CD4-positive, alpha-beta T cell (primary cell): ENCODE measurements at regions of chr16 and their contacts with region 1.

Region 1: GRCh38 chr16:3880623-3881498 is at the start of gene CREBBP:
- DNase-seq: peak; percentile 70 to 97 (median 86)
- ATAC-seq: peak; percentile 79
- H3K4me3 ChIP-seq: peak within 1 kb of the TSS; percentile 91
- H3K4me3 Mint-ChIP-seq: peak within 1 kb of the TSS; percentile 93
- H3K27ac ChIP-seq: no peak within 1 kb of the TSS
- H3K27ac Mint-ChIP-seq: peak within 1 kb of the TSS; percentile 94
- H3K4me1 ChIP-seq: peaks cover 37% of the 10 kb centered on the region
- H3K4me1 Mint-ChIP-seq: peaks cover 46% of the 10 kb centered on the region
- H3K27me3 ChIP-seq: peaks cover 0 to 2% of the 10 kb centered on the region in 2 experiments
- H3K27me3 Mint-ChIP-seq: peaks cover 8% of the 10 kb centered on the region
- CTCF ChIP-seq: no peak
- total RNA-seq, gene CREBBP: 145 to 152 TPM

Region 2: GRCh38 chr16:3611146-3611975 is 269.5 kb before region 1 on chr16 and contains the start of gene SLX4:
- CTCF ChIA-PET with region 1: no interaction called
- POLR2A ChIA-PET with region 1: no interaction called
- intact Hi-C with region 1: loop called in 1 of 2 experiments (anchors 2 kb)
- DNase-seq: peak; percentile 76 to 99 (median 92)
- ATAC-seq: peak; percentile 86
- H3K4me3 ChIP-seq: peak within 1 kb of the TSS; percentile 95
- H3K4me3 Mint-ChIP-seq: peak within 1 kb of the TSS; percentile 98
- H3K27ac ChIP-seq: peak within 1 kb of the TSS; percentile 80 to 86
- H3K27ac Mint-ChIP-seq: peak within 1 kb of the TSS; percentile 90
- H3K4me1 ChIP-seq: peaks cover 37% of the 10 kb centered on the region
- H3K4me1 Mint-ChIP-seq: peaks cover 53% of the 10 kb centered on the region
- H3K27me3 ChIP-seq: no peaks in the 10 kb centered on the region
- H3K27me3 Mint-ChIP-seq: no peaks in the 10 kb centered on the region
- CTCF ChIP-seq: no peak
- total RNA-seq, gene SLX4: 5.1 to 5.2 TPM

Region 3: GRCh38 chr16:3690470-3690928 is 190.4 kb before region 1 on chr16:
- CTCF ChIA-PET with region 1: interaction called, 4 read pairs
- POLR2A ChIA-PET with region 1: no interaction called
- intact Hi-C with region 1: loop called (anchors 1 to 2 kb)
- DNase-seq: peak; percentile 71 to 89 (median 80)
- ATAC-seq: peak; percentile 99
- H3K4me3 ChIP-seq: no peak overlapping the region
- H3K4me3 Mint-ChIP-seq: no peak overlapping the region
- H3K27ac ChIP-seq: no peak overlapping the region
- H3K27ac Mint-ChIP-seq: peak overlapping the region; percentile 25
- H3K4me1 ChIP-seq: peaks cover 10% of the 10 kb centered on the region
- H3K4me1 Mint-ChIP-seq: peaks cover 7% of the 10 kb centered on the region
- H3K27me3 ChIP-seq: no peaks in the 10 kb centered on the region
- H3K27me3 Mint-ChIP-seq: no peaks in the 10 kb centered on the region
- CTCF ChIP-seq: peak; percentile 91

Region 4: GRCh38 chr16:3717235-3718018 is 163.4 kb before region 1 on chr16 and contains the start of gene TRAP1:
- CTCF ChIA-PET with region 1: no interaction called
- POLR2A ChIA-PET with region 1: interaction called, 8 read pairs
- intact Hi-C with region 1: loop called in 1 of 2 experiments (anchors 2 kb)
- DNase-seq: peak; percentile 83 to 96 (median 91)
- ATAC-seq: peak; percentile 98
- H3K4me3 ChIP-seq: peak within 1 kb of the TSS; percentile 98
- H3K4me3 Mint-ChIP-seq: peak within 1 kb of the TSS; percentile 92
- H3K27ac ChIP-seq: peak within 1 kb of the TSS; percentile 72 to 92
- H3K27ac Mint-ChIP-seq: peak within 1 kb of the TSS; percentile 89
- H3K4me1 ChIP-seq: peaks cover 33% of the 10 kb centered on the region
- H3K4me1 Mint-ChIP-seq: peaks cover 31% of the 10 kb centered on the region
- H3K27me3 ChIP-seq: no peaks in the 10 kb centered on the region
- H3K27me3 Mint-ChIP-seq: no peaks in the 10 kb centered on the region
- CTCF ChIP-seq: no peak
- total RNA-seq, gene TRAP1: 68.0 to 75.9 TPM

Region 5: DNA sequence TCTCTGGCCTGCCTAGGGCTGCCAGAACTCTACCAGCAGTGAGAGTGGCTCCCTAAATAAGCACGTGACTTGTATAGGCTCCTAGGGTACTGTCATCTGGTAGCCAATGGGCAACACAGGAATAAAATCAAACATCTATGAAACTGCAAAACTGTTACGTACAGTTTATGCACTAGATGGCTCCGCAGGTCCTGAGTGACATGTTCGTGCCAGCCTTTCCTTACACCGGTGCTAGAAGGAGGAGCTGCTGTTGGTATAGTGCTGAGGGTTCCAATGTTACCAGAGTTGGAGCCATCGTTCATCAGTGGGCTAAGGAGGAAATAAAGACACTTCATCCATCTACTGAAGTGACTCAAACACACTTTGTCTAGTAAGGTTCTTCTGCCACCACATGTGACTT is 100.3 kb before region 1 on chr16:
- CTCF ChIA-PET with region 1: no interaction called
- POLR2A ChIA-PET with region 1: no interaction called
- intact Hi-C with region 1: loop called in 1 of 2 experiments (anchors 5 kb)
- DNase-seq: peak in 4 of 14 experiments; percentile 14 to 42 (median 31)
- ATAC-seq: peak; percentile 80
- H3K4me3 ChIP-seq: no peak overlapping the region
- H3K4me3 Mint-ChIP-seq: no peak overlapping the region
- H3K27ac ChIP-seq: no peak overlapping the region
- H3K27ac Mint-ChIP-seq: no peak overlapping the region
- H3K4me1 ChIP-seq: no peaks in the 10 kb centered on the region
- H3K4me1 Mint-ChIP-seq: peaks cover 27% of the 10 kb centered on the region
- H3K27me3 ChIP-seq: no peaks in the 10 kb centered on the region
- H3K27me3 Mint-ChIP-seq: no peaks in the 10 kb centered on the region
- CTCF ChIP-seq: no peak

Region 6: DNA sequence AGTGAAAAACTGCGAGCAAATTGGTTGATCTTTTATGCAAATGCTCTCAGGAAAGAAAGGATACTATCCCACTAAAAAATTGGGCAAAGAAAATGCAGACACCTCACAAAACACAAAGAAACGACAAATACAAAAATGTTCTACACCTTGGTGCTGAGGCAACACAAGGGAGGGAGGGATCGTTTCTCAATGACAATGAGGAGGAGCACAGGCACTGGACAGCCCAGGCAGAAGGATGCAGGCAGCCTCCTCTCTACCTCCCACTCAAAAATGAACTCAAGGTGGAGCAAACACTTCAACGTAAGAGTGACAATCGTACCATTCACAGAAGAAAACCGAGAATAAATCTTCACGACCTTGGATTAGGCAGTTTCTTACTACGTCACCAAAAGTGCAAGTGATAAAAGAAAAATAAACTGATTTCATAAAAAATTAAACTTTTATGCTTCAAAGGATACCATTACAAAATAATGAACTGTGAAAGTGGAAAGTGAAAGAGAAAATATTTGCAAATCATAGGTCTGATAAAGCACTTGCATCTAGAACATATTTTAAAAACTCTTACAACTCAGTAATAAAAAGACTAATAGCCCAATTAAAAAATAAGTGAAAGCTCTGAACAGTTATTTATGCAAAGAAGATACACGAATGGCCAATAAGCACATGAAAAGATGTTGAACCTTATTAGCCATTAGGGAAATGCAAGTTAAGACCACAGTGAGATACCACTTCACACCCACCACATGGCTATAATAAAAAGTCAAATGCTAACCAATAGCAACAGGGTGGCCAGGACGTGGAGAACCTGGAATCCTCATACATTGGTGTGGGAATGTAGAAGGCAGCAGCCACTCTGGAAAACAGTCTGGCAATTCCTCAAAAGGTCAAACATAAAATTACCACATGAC is 82.7 kb before region 1 on chr16:
- CTCF ChIA-PET with region 1: no interaction called
- POLR2A ChIA-PET with region 1: no interaction called
- intact Hi-C with region 1: loop called in 1 of 2 experiments (anchors 5 kb)
- DNase-seq: peak in 1 of 14 experiments; percentile 23
- ATAC-seq: no peak
- H3K4me3 ChIP-seq: no peak overlapping the region
- H3K4me3 Mint-ChIP-seq: peak overlapping the region; percentile 60
- H3K27ac ChIP-seq: no peak overlapping the region
- H3K27ac Mint-ChIP-seq: no peak overlapping the region
- H3K4me1 ChIP-seq: peaks cover 20% of the 10 kb centered on the region
- H3K4me1 Mint-ChIP-seq: peaks cover 77% of the 10 kb centered on the region
- H3K27me3 ChIP-seq: no peaks in the 10 kb centered on the region
- H3K27me3 Mint-ChIP-seq: no peaks in the 10 kb centered on the region
- CTCF ChIP-seq: no peak

Region 7: DNA sequence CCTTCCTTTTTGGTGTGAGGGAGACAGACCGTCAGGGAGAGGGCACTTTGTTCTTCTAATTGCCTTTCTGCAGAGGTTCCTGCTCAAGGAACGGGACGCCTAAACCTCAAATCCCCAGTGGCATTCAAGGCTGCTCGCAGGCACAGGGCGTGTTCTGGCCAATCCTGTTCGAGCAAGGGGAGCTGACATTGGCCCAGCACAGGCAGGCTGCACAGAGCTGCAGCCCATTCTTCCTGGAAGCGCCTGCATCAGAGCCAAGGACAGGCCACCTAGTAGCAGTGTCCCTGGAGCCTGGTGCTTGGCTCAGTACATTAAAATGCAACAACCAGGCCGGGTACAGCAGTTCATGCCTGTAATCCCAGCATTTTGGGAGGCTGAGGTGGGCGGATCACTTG is 71.9 kb after region 1 on chr16:
- CTCF ChIA-PET with region 1: no interaction called
- POLR2A ChIA-PET with region 1: no interaction called
- intact Hi-C with region 1: no loop called
- DNase-seq: no peak
- ATAC-seq: no peak
- H3K4me3 ChIP-seq: no peak overlapping the region
- H3K4me3 Mint-ChIP-seq: no peak overlapping the region
- H3K27ac ChIP-seq: no peak overlapping the region
- H3K27ac Mint-ChIP-seq: no peak overlapping the region
- H3K4me1 ChIP-seq: no peaks in the 10 kb centered on the region
- H3K4me1 Mint-ChIP-seq: no peaks in the 10 kb centered on the region
- H3K27me3 ChIP-seq: peaks cover 19 to 28% of the 10 kb centered on the region in 2 experiments
- H3K27me3 Mint-ChIP-seq: peaks cover 56% of the 10 kb centered on the region
- CTCF ChIP-seq: no peak

Region 8: GRCh38 chr16:4160658-4161430 is 280.0 kb after region 1 on chr16:
- CTCF ChIA-PET with region 1: no interaction called
- POLR2A ChIA-PET with region 1: no interaction called
- intact Hi-C with region 1: no loop called
- DNase-seq: peak in 1 of 14 experiments; percentile 32
- ATAC-seq: peak; percentile 70
- H3K4me3 ChIP-seq: no peak overlapping the region
- H3K4me3 Mint-ChIP-seq: no peak overlapping the region
- H3K27ac ChIP-seq: no peak overlapping the region
- H3K27ac Mint-ChIP-seq: no peak overlapping the region
- H3K4me1 ChIP-seq: no peaks in the 10 kb centered on the region
- H3K4me1 Mint-ChIP-seq: peaks cover 7% of the 10 kb centered on the region
- H3K27me3 ChIP-seq: no peaks in the 10 kb centered on the region
- H3K27me3 Mint-ChIP-seq: no peaks in the 10 kb centered on the region
- CTCF ChIP-seq: no peak